Activated CD4-positive, alpha-beta T cell treated with anti-CD3 and anti-CD28 coated beads, Interleukin-2, amount 10 ng/mL, durations not matched to agents 24 days and 14 days (primary cell): ENCODE measurements at regions of chr5 and their contacts with region 1.

Region 1: GRCh38 chr5:169650701-169651331 is 13.7 kb downstream of the DOCK2 start:
- DNase-seq: peak; percentile 79
- H3K4me3 Mint-ChIP-seq: peak overlapping the region; percentile 83
- H3K27ac Mint-ChIP-seq: peak overlapping the region; percentile 97
- H3K4me1 Mint-ChIP-seq: peaks cover 88% of the 10 kb centered on the region
- H3K27me3 Mint-ChIP-seq: no peaks in the 10 kb centered on the region

Region 2: GRCh38 chr5:168579488-168580226 is 1071.2 kb before region 1 on chr5:
- intact Hi-C with region 1: loop called (anchors 10 kb)
- DNase-seq: peak; percentile 99
- H3K4me3 Mint-ChIP-seq: peak overlapping the region; percentile 95
- H3K27ac Mint-ChIP-seq: peak overlapping the region; percentile 100
- H3K4me1 Mint-ChIP-seq: peaks cover 30% of the 10 kb centered on the region
- H3K27me3 Mint-ChIP-seq: no peaks in the 10 kb centered on the region

Region 3: GRCh38 chr5:169637085-169637548 is 13.7 kb before region 1 on chr5 and contains the start of gene DOCK2:
- intact Hi-C with region 1: loop called (anchors 1 kb)
- DNase-seq: peak; percentile 92
- H3K4me3 Mint-ChIP-seq: peak within 1 kb of the TSS; percentile 91
- H3K27ac Mint-ChIP-seq: peak within 1 kb of the TSS; percentile 95
- H3K4me1 Mint-ChIP-seq: peaks cover 41% of the 10 kb centered on the region
- H3K27me3 Mint-ChIP-seq: peaks cover 9% of the 10 kb centered on the region
- total RNA-seq, gene DOCK2: 206 and 215 TPM in 2 replicates

Region 4: GRCh38 chr5:169670769-169671525 is 20.1 kb after region 1 on chr5:
- intact Hi-C with region 1: loop called (anchors 1 kb)
- DNase-seq: peak; percentile 79
- H3K4me3 Mint-ChIP-seq: peak overlapping the region; percentile 33
- H3K27ac Mint-ChIP-seq: peak overlapping the region; percentile 61
- H3K4me1 Mint-ChIP-seq: peaks cover 27% of the 10 kb centered on the region
- H3K27me3 Mint-ChIP-seq: no peaks in the 10 kb centered on the region

Region 5: GRCh38 chr5:169701910-169702451 is 51.2 kb after region 1 on chr5:
- intact Hi-C with region 1: loop called (anchors 1 kb)
- DNase-seq: no peak
- H3K4me3 Mint-ChIP-seq: no peak overlapping the region
- H3K27ac Mint-ChIP-seq: peak overlapping the region; percentile 51
- H3K4me1 Mint-ChIP-seq: peaks cover 26% of the 10 kb centered on the region
- H3K27me3 Mint-ChIP-seq: no peaks in the 10 kb centered on the region